ENCODE measurements at regions of chr6 and their contacts with region 1.

Region 1: GRCh38 chr6:3721810-3722626 is 29.5 kb downstream of the PXDC1 start:
- DNase-seq: no peak
- H3K4me3 ChIP-seq: no peak overlapping the region
- H3K27ac ChIP-seq: no peak overlapping the region
- H3K4me1 ChIP-seq: no peaks in the 10 kb centered on the region
- H3K27me3 ChIP-seq: no peaks in the 10 kb centered on the region
- CTCF ChIP-seq: no peak

Region 2: GRCh38 chr6:3522561-3523250 is 199.3 kb before region 1 on chr6:
- CTCF ChIA-PET with region 1: no interaction called
- POLR2A ChIA-PET with region 1: no interaction called
- intact Hi-C with region 1: loop called (anchors 10 kb)
- DNase-seq: no peak
- H3K4me3 ChIP-seq: no peak overlapping the region
- H3K27ac ChIP-seq: no peak overlapping the region
- H3K4me1 ChIP-seq: no peaks in the 10 kb centered on the region
- H3K27me3 ChIP-seq: no peaks in the 10 kb centered on the region
- CTCF ChIP-seq: no peak

Region 3: GRCh38 chr6:3568396-3569082 is 153.5 kb before region 1 on chr6:
- CTCF ChIA-PET with region 1: no interaction called
- POLR2A ChIA-PET with region 1: no interaction called
- intact Hi-C with region 1: no loop called
- DNase-seq: no peak
- H3K4me3 ChIP-seq: no peak overlapping the region
- H3K27ac ChIP-seq: no peak overlapping the region
- H3K4me1 ChIP-seq: no peaks in the 10 kb centered on the region
- H3K27me3 ChIP-seq: no peaks in the 10 kb centered on the region
- CTCF ChIP-seq: no peak

Measured in A673 (cell line).